Activated T-helper 1 cell treated with anti-CD3 and anti-CD28 coated beads, Interleukin-12 subunit alpha, Interleukin-12 subunit beta, Interleukin-2, Interleukin-4 antibody, amounts not matched to agents 30 ng/mL and 10 ng/mL and 1 ng/mL, durations not matched to agents 14 hours and 24 hours and 36 hours (primary cell): ENCODE measurements at regions of chr11 and their contacts with region 1.

Region 1: GRCh38 chr11:95150946-95151684 is 61.5 kb downstream of the ENDOD1 start:
- DNase-seq: peak; percentile 87
- H3K4me3 Mint-ChIP-seq: peak overlapping the region; percentile 87
- H3K27ac Mint-ChIP-seq: peak overlapping the region; percentile 78
- H3K4me1 Mint-ChIP-seq: peaks cover 46% of the 10 kb centered on the region
- H3K27me3 Mint-ChIP-seq: peaks cover 6% of the 10 kb centered on the region

Region 2: DNA sequence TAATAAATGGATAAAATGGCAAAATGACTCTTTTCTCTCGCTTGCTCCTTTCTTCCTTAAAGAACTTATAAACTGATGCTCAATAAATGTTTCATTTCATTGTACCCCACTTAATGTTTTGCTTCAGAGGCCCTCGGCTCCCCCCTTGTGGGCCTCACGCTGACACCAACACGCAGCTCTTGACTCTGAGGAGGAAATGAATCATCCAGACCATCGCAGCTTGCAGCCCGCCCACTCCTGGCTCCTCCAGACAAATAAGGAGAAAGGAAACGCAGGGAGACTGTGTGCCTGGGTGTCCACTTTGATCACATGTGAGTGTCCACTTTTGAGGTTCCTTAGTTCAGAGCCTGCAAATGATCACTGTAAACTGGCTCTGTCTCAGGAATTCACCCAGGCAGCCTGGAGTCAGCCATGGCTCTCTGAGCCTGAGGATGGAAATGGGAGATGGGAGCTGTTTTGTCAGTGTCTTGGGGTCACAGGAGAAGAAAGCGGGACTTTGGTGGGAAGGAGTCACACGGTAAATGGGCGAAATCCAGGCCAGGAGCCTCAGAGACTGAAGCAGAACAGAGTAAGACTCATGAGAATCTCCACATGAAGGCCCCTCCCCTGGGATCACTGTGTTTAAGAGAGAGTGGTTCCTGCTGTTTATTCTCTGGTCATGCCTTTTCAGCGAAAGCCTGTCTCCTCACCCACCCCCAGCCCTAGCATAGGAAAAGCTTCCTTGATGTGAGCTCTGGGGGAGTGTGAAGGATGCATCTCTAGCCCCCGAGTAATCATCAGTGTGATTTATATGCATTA is 274.3 kb before region 1 on chr11:
- intact Hi-C with region 1: loop called (anchors 5 kb)
- DNase-seq: peak; percentile 38
- H3K4me3 Mint-ChIP-seq: peak overlapping the region; percentile 45
- H3K27ac Mint-ChIP-seq: peak overlapping the region; percentile 78
- H3K4me1 Mint-ChIP-seq: peaks cover 32% of the 10 kb centered on the region
- H3K27me3 Mint-ChIP-seq: no peaks in the 10 kb centered on the region

Region 3: DNA sequence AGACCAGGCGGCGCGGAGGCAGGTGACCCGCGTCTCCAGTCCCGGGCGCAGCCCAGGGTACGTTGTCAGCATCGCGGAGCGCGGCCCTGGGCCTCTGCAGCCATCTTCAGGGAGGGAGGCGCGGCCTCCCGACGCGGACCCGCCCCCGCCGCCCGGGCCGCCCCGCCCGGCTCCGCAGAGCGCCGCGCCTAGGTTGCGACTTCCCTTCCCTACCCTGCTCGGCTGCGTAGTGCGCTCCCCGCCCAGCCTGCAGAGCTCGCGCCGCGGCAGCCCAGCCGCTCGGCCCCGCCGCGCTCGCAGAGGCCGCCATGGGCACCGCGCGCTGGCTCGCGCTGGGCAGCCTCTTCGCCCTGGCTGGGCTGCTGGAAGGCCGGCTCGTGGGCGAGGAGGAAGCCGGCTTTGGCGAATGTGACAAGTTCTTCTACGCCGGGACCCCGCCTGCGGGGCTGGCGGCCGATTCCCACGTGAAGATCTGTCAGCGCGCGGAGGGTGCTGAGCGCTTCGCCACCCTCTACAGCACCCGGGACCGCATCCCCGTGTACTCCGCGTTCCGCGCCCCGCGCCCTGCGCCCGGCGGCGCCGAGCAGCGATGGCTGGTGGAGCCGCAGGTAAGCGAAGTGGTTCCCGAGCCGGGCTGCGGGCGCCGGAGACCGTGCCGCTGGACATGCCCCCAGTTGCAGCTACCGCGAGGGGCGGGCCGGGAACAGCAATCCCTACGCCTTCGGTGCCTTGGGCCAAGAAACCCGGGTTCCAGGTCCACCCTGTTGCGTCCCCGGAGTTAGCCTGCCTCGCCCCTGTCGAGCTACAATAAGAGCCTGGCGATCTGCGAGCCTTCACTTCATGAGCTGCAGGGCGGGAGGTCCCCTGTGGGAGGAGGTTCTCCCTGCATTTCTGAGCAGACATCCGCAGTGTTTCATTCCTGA is 61.2 kb before region 1 on chr11 and contains the start of gene ENDOD1:
- intact Hi-C with region 1: loop called (anchors 1 kb)
- DNase-seq: peak; percentile 85
- H3K4me3 Mint-ChIP-seq: peak within 1 kb of the TSS; percentile 89
- H3K27ac Mint-ChIP-seq: peak within 1 kb of the TSS; percentile 96
- H3K4me1 Mint-ChIP-seq: peaks cover 83% of the 10 kb centered on the region
- H3K27me3 Mint-ChIP-seq: no peaks in the 10 kb centered on the region
- total RNA-seq, gene ENDOD1: 33.8 and 34.3 TPM in 2 replicates

Region 4: DNA sequence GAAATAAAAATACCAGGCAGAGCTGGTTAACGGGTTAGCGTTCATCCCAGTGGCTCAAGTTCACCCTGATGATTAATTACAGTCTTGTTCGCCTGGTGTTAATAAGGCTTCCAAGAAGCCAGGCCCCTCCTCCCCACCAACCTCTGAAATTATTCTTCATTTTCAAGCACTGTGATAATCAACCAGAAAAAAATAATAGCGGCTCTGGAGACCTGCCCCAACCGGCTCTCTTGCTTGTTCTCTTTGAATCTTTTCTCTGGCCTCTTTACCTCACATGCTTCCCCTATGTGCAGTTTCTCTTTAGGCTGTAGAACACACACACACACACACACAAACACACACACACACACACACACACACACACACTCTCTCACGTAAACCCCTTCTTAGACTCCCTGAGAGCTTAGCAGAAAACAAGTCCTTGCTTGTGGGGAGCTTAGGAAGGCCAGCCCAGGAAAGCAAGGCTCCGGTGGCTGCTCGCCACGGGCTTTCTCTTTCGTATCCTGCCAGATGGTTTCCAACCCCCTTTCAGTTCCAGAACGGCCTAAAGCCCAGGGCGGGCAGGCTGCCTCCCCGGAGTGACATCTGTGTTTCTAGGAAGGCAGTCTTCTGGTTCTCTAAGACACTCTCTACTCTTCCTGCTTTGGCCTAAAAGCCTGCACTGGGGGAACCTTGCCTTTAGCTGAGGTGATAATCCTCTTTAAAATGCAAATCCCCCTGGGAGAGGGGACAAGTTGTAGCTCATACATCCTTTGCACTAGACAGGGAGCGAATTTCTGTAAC is 186.3 kb after region 1 on chr11:
- intact Hi-C with region 1: loop called (anchors 5 kb)
- DNase-seq: peak; percentile 41
- H3K4me3 Mint-ChIP-seq: no peak overlapping the region
- H3K27ac Mint-ChIP-seq: no peak overlapping the region
- H3K4me1 Mint-ChIP-seq: no peaks in the 10 kb centered on the region
- H3K27me3 Mint-ChIP-seq: peaks cover 8% of the 10 kb centered on the region

Region 5: DNA sequence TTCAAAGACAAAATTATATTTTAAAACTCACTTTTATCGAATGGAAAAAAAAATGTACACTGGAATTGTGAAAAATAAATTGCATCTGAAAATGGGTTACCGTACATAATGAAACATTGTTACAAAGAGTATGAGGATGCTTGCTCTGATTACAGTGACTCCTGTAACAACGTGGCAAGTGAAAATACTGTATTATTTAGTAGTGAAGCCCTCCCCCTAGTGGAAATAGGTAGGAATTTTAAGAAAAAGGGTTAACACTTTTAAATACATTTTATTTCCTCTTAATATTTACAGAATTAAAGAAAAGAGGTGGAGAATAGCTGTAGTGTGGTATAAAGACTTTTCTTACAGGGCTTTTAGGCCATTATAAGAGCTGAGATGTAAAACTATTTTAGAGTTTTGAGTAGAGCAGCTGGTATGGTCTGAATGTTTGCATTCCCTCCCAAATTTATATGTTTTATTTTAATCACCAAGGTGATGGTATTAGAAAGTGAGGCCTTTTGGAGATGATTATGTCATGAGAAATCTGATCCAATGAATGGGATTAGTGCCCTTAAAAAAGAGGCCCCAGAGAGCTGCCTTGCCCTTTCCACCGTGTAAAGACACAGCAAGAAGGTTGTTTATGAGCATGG is 613.3 kb after region 1 on chr11:
- intact Hi-C with region 1: loop called (anchors 1 kb)
- DNase-seq: no peak
- H3K4me3 Mint-ChIP-seq: no peak overlapping the region
- H3K27ac Mint-ChIP-seq: no peak overlapping the region
- H3K4me1 Mint-ChIP-seq: no peaks in the 10 kb centered on the region
- H3K27me3 Mint-ChIP-seq: no peaks in the 10 kb centered on the region

Region 6: GRCh38 chr11:96424693-96425092 is 1273.6 kb after region 1 on chr11:
- intact Hi-C with region 1: loop called (anchors 2 kb)
- DNase-seq: no peak
- H3K4me3 Mint-ChIP-seq: no peak overlapping the region
- H3K27ac Mint-ChIP-seq: no peak overlapping the region
- H3K4me1 Mint-ChIP-seq: peaks cover 6% of the 10 kb centered on the region
- H3K27me3 Mint-ChIP-seq: peaks cover 46% of the 10 kb centered on the region